HCT116 (cell line): ENCODE measurements at regions of chr6 and their contacts with region 1.

Region 1: GRCh38 chr6:1552296-1552761 is 57.4 kb upstream of the FOXC1 start:
- DNase-seq: peak; percentile 33
- ATAC-seq: peak; percentile 98
- H3K4me3 ChIP-seq: no peak overlapping the region
- H3K27ac ChIP-seq: no peak overlapping the region
- H3K4me1 ChIP-seq: no peaks in the 10 kb centered on the region
- H3K27me3 ChIP-seq: no peaks in the 10 kb centered on the region
- CTCF ChIP-seq: peak; percentile 30 to 62 (median 57); a peak in 5 of 6 replicates
- POLR2A ChIP-seq: no peak
- RAD21 ChIP-seq: peak; percentile 49; the same call in 1 of the 2 replicates

Region 2: GRCh38 chr6:1562171-1562955 is 10.0 kb after region 1 on chr6:
- CTCF ChIA-PET with region 1: interaction called, 12 read pairs
- POLR2A ChIA-PET with region 1: no interaction called
- RAD21 ChIA-PET with region 1: no interaction called
- intact Hi-C with region 1: no loop called
- DNase-seq: no peak
- ATAC-seq: no peak
- H3K4me3 ChIP-seq: no peak overlapping the region
- H3K27ac ChIP-seq: no peak overlapping the region
- H3K4me1 ChIP-seq: 0 out of 4 replicates have a peak, but pooled peaks cover 0 to 3% of the 10 kb centered on the region in 2 experiments
- H3K27me3 ChIP-seq: no peaks in the 10 kb centered on the region
- CTCF ChIP-seq: no peak
- POLR2A ChIP-seq: no peak
- RAD21 ChIP-seq: no peak